Esophagus muscularis mucosa (tissue), 4 donors: ENCODE measurements at regions of chr21 and their contacts with region 1.

Region 1: GRCh38 chr21:42009831-42010523 is at the start of gene ZBTB21:
- DNase-seq: peak; percentile 99
- H3K4me3 ChIP-seq: peak within 1 kb of the TSS; percentile 83 to 99 (median 90)
- H3K27ac ChIP-seq: peak within 1 kb of the TSS; percentile 97 to 100 (median 98)
- H3K4me1 ChIP-seq: peaks cover 10 to 21% (median 16%) of the 10 kb centered on the region in 4 donors
- H3K27me3 ChIP-seq: no peaks in the 10 kb centered on the region
- CTCF ChIP-seq: no peak
- EP300 ChIP-seq: no peak
- POLR2A ChIP-seq: peak; percentile 85
- total RNA-seq, gene ZBTB21: 5.9 to 15.1 (median 9.2) TPM

Region 2: GRCh38 chr21:41725421-41726041 is 284.4 kb before region 1 on chr21:
- intact Hi-C with region 1: no loop called
- DNase-seq: no peak
- H3K4me3 ChIP-seq: peak overlapping the region; percentile 2 to 22 (median 20)
- H3K27ac ChIP-seq: no peak overlapping the region
- H3K4me1 ChIP-seq: peaks cover 0 to 17% (median 16%) of the 10 kb centered on the region in 4 donors
- H3K27me3 ChIP-seq: peaks cover 0 to 79% (median 4%) of the 10 kb centered on the region in 4 donors
- CTCF ChIP-seq: no peak
- EP300 ChIP-seq: no peak
- POLR2A ChIP-seq: no peak

Region 3: GRCh38 chr21:41879190-41879998 is 130.6 kb before region 1 on chr21 and contains the start of gene PRDM15:
- intact Hi-C with region 1: loop called (anchors 5 kb)
- DNase-seq: no peak
- H3K4me3 ChIP-seq: peak within 1 kb of the TSS; percentile 83 to 95 (median 84)
- H3K27ac ChIP-seq: peak within 1 kb of the TSS; percentile 76 to 89 (median 80)
- H3K4me1 ChIP-seq: peaks cover 4 to 30% (median 28%) of the 10 kb centered on the region in 4 donors
- H3K27me3 ChIP-seq: no peaks in the 10 kb centered on the region
- CTCF ChIP-seq: no peak
- EP300 ChIP-seq: no peak
- POLR2A ChIP-seq: no peak
- total RNA-seq, gene PRDM15: 5.0 to 6.3 (median 5.4) TPM

Region 4: GRCh38 chr21:41933313-41934086 is 76.5 kb before region 1 on chr21:
- intact Hi-C with region 1: loop called (anchors 5 kb)
- DNase-seq: no peak
- H3K4me3 ChIP-seq: peak overlapping the region; percentile 39 to 51 (median 45)
- H3K27ac ChIP-seq: peak overlapping the region; percentile 52 to 78 (median 65)
- H3K4me1 ChIP-seq: peaks cover 17 to 31% (median 23%) of the 10 kb centered on the region in 4 donors
- H3K27me3 ChIP-seq: no peaks in the 10 kb centered on the region
- CTCF ChIP-seq: peak in 1 of 3 experiments; percentile 29
- EP300 ChIP-seq: no peak
- POLR2A ChIP-seq: no peak

Region 5: GRCh38 chr21:41953831-41954653 is 55.9 kb before region 1 on chr21 and contains the start of gene C2CD2:
- intact Hi-C with region 1: loop called (anchors 5 kb)
- DNase-seq: no peak
- H3K4me3 ChIP-seq: peak within 1 kb of the TSS; percentile 74 to 93 (median 80)
- H3K27ac ChIP-seq: peak within 1 kb of the TSS; percentile 62 to 82 (median 76)
- H3K4me1 ChIP-seq: peaks cover 28 to 72% (median 57%) of the 10 kb centered on the region in 4 donors
- H3K27me3 ChIP-seq: no peaks in the 10 kb centered on the region
- CTCF ChIP-seq: no peak
- EP300 ChIP-seq: no peak
- POLR2A ChIP-seq: no peak
- total RNA-seq, gene C2CD2: 11.6 to 25.3 (median 18.9) TPM

Region 6: DNA sequence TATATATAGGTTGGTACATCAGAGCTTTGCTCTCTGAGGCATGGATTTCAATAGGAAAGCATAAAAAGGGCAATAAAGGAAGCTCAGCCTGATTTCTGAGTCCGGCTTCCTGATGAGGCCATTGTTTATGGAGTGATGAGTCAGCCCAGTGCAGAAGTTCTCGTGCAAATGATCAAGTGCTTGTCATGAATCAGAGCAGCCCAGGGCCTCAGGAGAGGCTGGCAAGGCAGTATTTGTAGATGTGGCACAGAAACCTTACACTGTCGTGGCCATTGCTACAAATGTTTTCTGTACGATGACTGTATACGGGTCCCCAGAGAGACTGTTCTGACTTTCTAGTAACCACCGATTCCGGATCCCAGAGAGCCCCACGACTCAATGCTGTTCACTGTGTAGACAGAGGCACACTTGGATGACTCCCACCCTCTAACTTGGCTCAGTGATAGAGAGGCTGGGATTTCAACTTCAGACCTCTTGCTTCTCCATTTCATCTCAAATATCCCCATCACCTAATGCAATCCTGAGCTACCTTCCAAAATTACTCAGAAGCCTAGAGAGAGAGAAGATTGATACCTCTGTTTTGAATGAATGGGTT is 88.0 kb after region 1 on chr21:
- intact Hi-C with region 1: loop called (anchors 5 kb)
- DNase-seq: no peak
- H3K4me3 ChIP-seq: no peak overlapping the region
- H3K27ac ChIP-seq: peak overlapping the region in 2 of 4 donors; percentile 32 to 42
- H3K4me1 ChIP-seq: peaks cover 8 to 14% (median 11%) of the 10 kb centered on the region in 4 donors
- H3K27me3 ChIP-seq: peaks cover 0 to 8% (median 2%) of the 10 kb centered on the region in 4 donors
- CTCF ChIP-seq: no peak
- EP300 ChIP-seq: no peak
- POLR2A ChIP-seq: no peak

Region 7: DNA sequence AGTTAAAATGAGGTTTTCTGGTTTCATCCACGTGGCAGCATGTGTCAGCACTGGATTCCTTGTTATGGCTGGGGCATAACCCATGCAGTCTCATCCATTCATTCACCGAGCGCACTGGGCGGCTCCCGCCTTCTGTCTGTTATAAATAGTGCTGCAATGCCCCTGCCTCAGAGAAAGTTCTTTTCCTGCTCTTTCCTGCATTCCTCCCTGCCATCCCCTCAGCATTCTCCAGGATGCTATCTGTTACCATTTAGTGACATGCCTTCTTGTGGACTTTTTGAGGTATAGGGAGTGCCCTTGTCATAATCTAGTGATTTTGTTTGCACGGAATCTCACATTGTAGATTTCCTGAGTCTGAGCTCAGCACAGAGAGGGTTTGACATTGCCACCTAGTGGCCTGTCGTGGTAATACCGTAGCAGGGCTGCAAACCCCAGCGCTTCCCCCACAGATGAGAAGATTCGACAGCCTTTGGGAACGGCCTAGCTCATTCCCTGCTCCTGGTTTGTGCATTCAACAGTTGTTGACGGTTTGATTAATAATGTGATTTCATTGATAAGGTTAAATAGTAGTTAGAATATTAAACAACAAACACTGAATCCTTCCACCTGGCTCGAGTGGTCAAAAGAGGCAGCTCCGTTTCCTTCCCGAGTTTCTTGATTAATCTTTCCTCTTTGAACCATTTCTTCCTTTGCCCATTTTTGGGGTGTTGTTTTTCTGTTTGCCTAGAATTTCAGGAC is 107.4 kb after region 1 on chr21:
- intact Hi-C with region 1: loop called (anchors 5 kb)
- DNase-seq: no peak
- H3K4me3 ChIP-seq: peak overlapping the region in 1 of 4 donors; percentile 17
- H3K27ac ChIP-seq: no peak overlapping the region
- H3K4me1 ChIP-seq: peaks cover 8 to 19% (median 11%) of the 10 kb centered on the region in 4 donors
- H3K27me3 ChIP-seq: peaks cover 0 to 75% (median 9%) of the 10 kb centered on the region in 4 donors
- CTCF ChIP-seq: peak; percentile 92 to 99 (median 94)
- EP300 ChIP-seq: no peak
- POLR2A ChIP-seq: no peak